Heart left ventricle (tissue), 16 donors: ENCODE measurements at regions of chr16 and their contacts with region 1.

Region 1: GRCh38 chr16:24568392-24568791 is 29.0 kb downstream of the RBBP6 start:
- DNase-seq: no peak
- ATAC-seq: no peak
- H3K4me3 ChIP-seq: no peak overlapping the region
- H3K27ac ChIP-seq: no peak overlapping the region
- H3K4me1 ChIP-seq: peaks cover 0 to 7% (median 0%) of the 10 kb centered on the region in 12 donors
- H3K27me3 ChIP-seq: no peaks in the 10 kb centered on the region
- CTCF ChIP-seq: peak in 8 of 12 donors; percentile 6 to 44 (median 20)
- POLR2A ChIP-seq: no peak

Region 2: GRCh38 chr16:24689145-24689544 is 120.8 kb after region 1 on chr16:
- intact Hi-C with region 1: no loop called
- DNase-seq: no peak
- ATAC-seq: peak; percentile 23 to 65 (median 58)
- H3K4me3 ChIP-seq: no peak overlapping the region
- H3K27ac ChIP-seq: no peak overlapping the region
- H3K4me1 ChIP-seq: peaks cover 0 to 15% (median 2%) of the 10 kb centered on the region in 12 donors
- H3K27me3 ChIP-seq: no peaks in the 10 kb centered on the region
- CTCF ChIP-seq: peak; percentile 2 to 66 (median 50)
- POLR2A ChIP-seq: no peak

Region 3: DNA sequence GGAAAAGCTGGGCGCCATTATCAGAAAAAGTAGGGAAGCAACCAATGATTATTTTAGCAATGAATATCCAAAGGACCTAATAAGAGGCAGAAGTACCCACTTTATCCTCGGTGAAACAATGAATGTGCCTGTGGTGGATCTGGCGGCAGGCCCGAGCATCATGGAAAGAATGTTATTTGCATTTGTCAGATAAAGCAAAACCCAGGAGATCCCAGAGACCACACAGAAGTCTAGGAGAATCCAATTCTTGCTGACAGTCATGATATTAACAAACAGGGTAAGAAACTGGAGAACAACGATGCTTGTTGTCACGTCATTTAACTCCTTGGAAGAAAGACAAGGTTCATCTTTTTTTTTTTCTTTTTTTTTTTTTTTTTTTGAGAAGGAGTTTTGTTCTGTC is 149.0 kb after region 1 on chr16:
- intact Hi-C with region 1: no loop called
- DNase-seq: no peak
- ATAC-seq: no peak
- H3K4me3 ChIP-seq: no peak overlapping the region
- H3K27ac ChIP-seq: peak overlapping the region in 1 of 12 donors; percentile 49
- H3K4me1 ChIP-seq: peaks cover 0 to 11% (median 0%) of the 10 kb centered on the region in 12 donors
- H3K27me3 ChIP-seq: no peaks in the 10 kb centered on the region
- CTCF ChIP-seq: no peak
- POLR2A ChIP-seq: no peak

Region 4: DNA sequence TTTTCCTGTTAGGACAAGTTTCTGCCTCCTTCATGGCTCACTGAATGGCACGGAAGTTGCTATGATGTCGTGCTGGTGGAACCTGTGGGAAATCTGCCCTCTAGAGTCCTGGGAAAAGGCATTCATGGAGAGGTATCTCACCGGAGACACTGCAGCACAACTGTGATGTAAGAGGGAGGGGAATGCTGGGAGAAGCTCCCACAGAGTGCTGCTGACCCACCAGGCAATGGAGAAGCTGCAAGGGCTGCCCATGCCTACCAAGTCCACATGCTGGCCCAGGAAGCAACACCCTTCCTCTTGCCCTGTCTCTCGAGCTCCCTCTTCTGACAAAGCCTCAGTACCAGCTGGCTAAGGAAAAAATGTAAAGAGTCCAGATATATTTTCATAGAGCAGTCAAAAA is 232.2 kb after region 1 on chr16:
- intact Hi-C with region 1: loop called in 7 of 10 experiments (anchors 5 to 10 kb)
- DNase-seq: no peak
- ATAC-seq: peak; percentile 21 to 60 (median 56)
- H3K4me3 ChIP-seq: no peak overlapping the region
- H3K27ac ChIP-seq: no peak overlapping the region
- H3K4me1 ChIP-seq: no peaks in the 10 kb centered on the region
- H3K27me3 ChIP-seq: no peaks in the 10 kb centered on the region
- CTCF ChIP-seq: peak in 7 of 12 donors; percentile 6 to 44 (median 25)
- POLR2A ChIP-seq: no peak

Region 5: GRCh38 chr16:24810951-24811843 is 242.8 kb after region 1 on chr16:
- intact Hi-C with region 1: loop called in 6 of 10 experiments (anchors 5 to 10 kb)
- DNase-seq: no peak
- ATAC-seq: peak; percentile 9 to 41 (median 18)
- H3K4me3 ChIP-seq: no peak overlapping the region
- H3K27ac ChIP-seq: no peak overlapping the region
- H3K4me1 ChIP-seq: peaks cover 0 to 12% (median 0%) of the 10 kb centered on the region in 12 donors
- H3K27me3 ChIP-seq: no peaks in the 10 kb centered on the region
- CTCF ChIP-seq: no peak
- POLR2A ChIP-seq: no peak

Region 6: GRCh38 chr16:24939234-24939633 is 370.8 kb after region 1 on chr16:
- intact Hi-C with region 1: loop called in 1 of 10 experiments (anchors 10 kb)
- DNase-seq: no peak
- ATAC-seq: peak in 1 of 4 donors; percentile 42
- H3K4me3 ChIP-seq: no peak overlapping the region
- H3K27ac ChIP-seq: no peak overlapping the region
- H3K4me1 ChIP-seq: no peaks in the 10 kb centered on the region
- H3K27me3 ChIP-seq: no peaks in the 10 kb centered on the region
- CTCF ChIP-seq: no peak
- POLR2A ChIP-seq: no peak